ENCODE measurements at regions of chr4 and their contacts with region 1.

Region 1: DNA sequence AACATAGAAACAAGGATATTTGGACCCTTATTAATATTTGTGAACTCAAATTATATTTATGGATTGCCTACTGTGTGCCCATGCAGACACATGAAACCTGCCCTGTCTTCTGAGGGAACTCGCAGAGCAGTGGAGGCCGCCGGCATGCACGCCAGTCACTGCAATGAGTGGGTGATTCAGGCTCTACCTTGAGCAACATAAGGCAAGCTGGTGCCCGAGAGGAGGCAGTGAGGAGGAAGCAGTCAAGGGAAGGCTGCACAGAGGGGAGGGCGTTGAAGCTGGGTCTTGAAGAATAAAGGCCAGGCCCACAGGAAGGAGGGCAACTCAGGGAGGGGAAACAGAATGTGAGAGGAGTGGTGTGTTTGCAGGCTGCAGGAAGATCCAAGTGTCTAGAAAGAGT is 52.8 kb downstream of the PPEF2 start:
- DNase-seq: peak in 1 of 9 experiments; percentile 4
- ATAC-seq: no peak
- H3K4me3 ChIP-seq: no peak overlapping the region
- H3K4me3 Mint-ChIP-seq: no peak overlapping the region
- H3K27ac ChIP-seq: no peak overlapping the region
- H3K27ac Mint-ChIP-seq: no peak overlapping the region
- H3K4me1 ChIP-seq: no peaks in the 10 kb centered on the region
- H3K4me1 Mint-ChIP-seq: no peaks in the 10 kb centered on the region
- H3K27me3 ChIP-seq: no peaks in the 10 kb centered on the region
- H3K27me3 Mint-ChIP-seq: peaks cover 3% of the 10 kb centered on the region
- CTCF ChIP-seq: no peak

Region 2: GRCh38 chr4:74874753-74875367 is 974.6 kb before region 1 on chr4:
- CTCF ChIA-PET with region 1: interaction called, 5 read pairs
- POLR2A ChIA-PET with region 1: no interaction called
- intact Hi-C with region 1: loop called in 1 of 2 experiments (anchors 2 kb)
- DNase-seq: peak in 4 of 9 experiments; percentile 5 to 68 (median 35)
- ATAC-seq: peak; percentile 61
- H3K4me3 ChIP-seq: no peak overlapping the region
- H3K4me3 Mint-ChIP-seq: no peak overlapping the region
- H3K27ac ChIP-seq: no peak overlapping the region
- H3K27ac Mint-ChIP-seq: no peak overlapping the region
- H3K4me1 ChIP-seq: no peaks in the 10 kb centered on the region
- H3K4me1 Mint-ChIP-seq: no peaks in the 10 kb centered on the region
- H3K27me3 ChIP-seq: no peaks in the 10 kb centered on the region
- H3K27me3 Mint-ChIP-seq: peaks cover 12% of the 10 kb centered on the region
- CTCF ChIP-seq: peak; percentile 76

Region 3: DNA sequence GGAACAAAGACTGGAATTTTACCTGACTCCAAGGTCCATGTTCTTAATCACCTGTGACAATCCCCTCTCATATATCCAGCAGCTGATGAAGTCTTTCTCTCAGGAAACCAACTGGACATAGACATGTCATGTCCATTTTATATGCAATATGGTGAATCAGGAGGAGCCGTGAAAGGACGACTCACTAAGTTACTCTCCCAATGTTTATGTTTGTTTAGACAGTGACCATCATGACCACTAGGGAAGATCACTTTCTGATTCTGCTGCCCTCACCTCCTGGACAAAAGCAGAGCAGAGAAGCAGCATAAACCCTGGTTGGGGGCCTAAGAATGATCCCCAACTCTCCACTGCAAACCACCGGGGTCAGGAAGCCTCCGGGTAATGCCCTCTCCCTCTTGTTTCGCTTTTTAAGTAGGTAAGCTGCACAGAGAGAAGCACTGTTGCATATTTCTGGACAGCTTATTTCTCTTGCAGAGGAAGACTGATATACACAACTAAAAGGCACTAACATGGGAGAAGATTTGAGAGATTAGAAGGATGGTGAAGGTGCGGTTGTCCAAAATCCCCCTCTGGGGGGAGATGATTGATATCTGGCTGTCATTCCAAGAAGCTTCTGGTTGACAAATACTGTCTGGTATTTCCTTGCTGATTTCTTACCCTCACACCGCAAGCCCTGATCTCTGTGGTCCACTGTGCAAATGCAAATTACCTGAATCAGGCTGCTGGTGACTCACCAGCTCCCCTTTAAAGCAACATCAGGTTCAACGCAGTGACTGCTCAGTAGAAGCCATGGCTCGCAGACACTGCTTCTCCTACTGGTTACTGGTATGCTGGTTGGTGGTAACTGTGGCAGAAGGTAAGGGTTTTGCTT is 293.9 kb before region 1 on chr4 and contains the start of gene ODAPH:
- CTCF ChIA-PET with region 1: interaction called, 10 read pairs
- POLR2A ChIA-PET with region 1: no interaction called
- intact Hi-C with region 1: no loop called
- DNase-seq: peak in 3 of 9 experiments; percentile 12 to 35 (median 23)
- ATAC-seq: peak; percentile 73
- H3K4me3 ChIP-seq: no peak within 1 kb of the TSS
- H3K4me3 Mint-ChIP-seq: no peak within 1 kb of the TSS
- H3K27ac ChIP-seq: no peak within 1 kb of the TSS
- H3K27ac Mint-ChIP-seq: no peak within 1 kb of the TSS
- H3K4me1 ChIP-seq: no peaks in the 10 kb centered on the region
- H3K4me1 Mint-ChIP-seq: no peaks in the 10 kb centered on the region
- H3K27me3 ChIP-seq: no peaks in the 10 kb centered on the region
- H3K27me3 Mint-ChIP-seq: peaks cover 18% of the 10 kb centered on the region
- CTCF ChIP-seq: no peak
- total RNA-seq, gene ODAPH: 0.16 TPM in 1 of 2 experiments, not detected in the other

Region 4: GRCh38 chr4:75565481-75565880 is 284.0 kb before region 1 on chr4:
- CTCF ChIA-PET with region 1: interaction called, 22 read pairs
- POLR2A ChIA-PET with region 1: no interaction called
- intact Hi-C with region 1: no loop called
- DNase-seq: no peak
- ATAC-seq: no peak
- H3K4me3 ChIP-seq: no peak overlapping the region
- H3K4me3 Mint-ChIP-seq: no peak overlapping the region
- H3K27ac ChIP-seq: no peak overlapping the region
- H3K27ac Mint-ChIP-seq: no peak overlapping the region
- H3K4me1 ChIP-seq: no peaks in the 10 kb centered on the region
- H3K4me1 Mint-ChIP-seq: no peaks in the 10 kb centered on the region
- H3K27me3 ChIP-seq: no peaks in the 10 kb centered on the region
- H3K27me3 Mint-ChIP-seq: peaks cover 3% of the 10 kb centered on the region
- CTCF ChIP-seq: no peak

Region 5: DNA sequence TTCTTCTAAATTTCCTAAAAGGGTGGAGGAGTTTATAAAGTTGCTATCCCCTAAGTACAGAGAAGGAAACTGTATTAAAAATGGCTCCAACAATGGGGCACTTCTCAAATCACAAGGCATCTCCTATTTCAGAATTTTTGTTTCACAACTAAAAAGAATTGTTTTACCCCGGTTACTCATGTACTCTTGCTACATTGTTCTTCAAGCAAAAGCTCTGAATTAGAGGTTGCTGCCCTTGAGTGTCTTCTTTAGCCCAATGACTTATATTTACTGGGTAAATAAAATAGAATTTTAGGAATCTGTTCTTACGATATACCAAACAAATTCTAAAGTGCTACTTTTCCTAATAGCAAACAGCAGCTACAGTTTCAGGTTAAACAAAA is 14.7 kb before region 1 on chr4:
- CTCF ChIA-PET with region 1: interaction called, 20 read pairs
- POLR2A ChIA-PET with region 1: no interaction called
- intact Hi-C with region 1: no loop called
- DNase-seq: no peak
- ATAC-seq: no peak
- H3K4me3 ChIP-seq: no peak overlapping the region
- H3K4me3 Mint-ChIP-seq: no peak overlapping the region
- H3K27ac ChIP-seq: no peak overlapping the region
- H3K27ac Mint-ChIP-seq: no peak overlapping the region
- H3K4me1 ChIP-seq: no peaks in the 10 kb centered on the region
- H3K4me1 Mint-ChIP-seq: no peaks in the 10 kb centered on the region
- H3K27me3 ChIP-seq: no peaks in the 10 kb centered on the region
- H3K27me3 Mint-ChIP-seq: peaks cover 7% of the 10 kb centered on the region
- CTCF ChIP-seq: no peak

Region 6: DNA sequence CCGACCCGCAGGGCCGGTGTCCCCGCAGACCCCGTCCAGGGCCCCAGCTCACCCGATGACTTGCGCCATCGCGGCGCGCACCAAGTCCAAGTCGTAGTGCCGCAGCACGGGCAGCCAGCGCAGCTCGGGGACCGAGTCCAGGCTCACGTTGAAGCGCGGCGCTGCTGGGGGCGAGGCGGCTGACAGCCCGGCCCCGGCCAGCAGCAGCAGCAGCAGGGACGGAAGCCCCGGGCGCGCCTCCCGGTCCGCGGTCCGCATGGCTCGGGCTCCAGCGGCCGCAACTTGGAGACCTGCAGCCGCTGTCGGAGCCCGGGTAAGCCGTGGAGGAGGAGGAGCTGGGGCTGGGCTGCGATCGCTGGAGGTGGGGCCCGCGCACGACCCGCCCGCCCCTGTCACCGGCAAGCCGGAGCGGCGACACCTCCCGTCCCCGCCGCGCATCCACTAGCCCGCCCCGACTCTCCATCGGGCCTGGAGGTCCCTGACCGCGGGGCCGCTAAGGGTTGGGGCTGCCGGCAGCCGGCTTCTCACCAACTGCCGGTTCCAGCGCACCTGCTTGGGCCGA is 91.3 kb after region 1 on chr4 and contains the start of gene NAAA:
- CTCF ChIA-PET with region 1: no interaction called
- POLR2A ChIA-PET with region 1: no interaction called
- intact Hi-C with region 1: no loop called
- DNase-seq: peak; percentile 44 to 92 (median 72)
- ATAC-seq: peak; percentile 79
- H3K4me3 ChIP-seq: peak within 1 kb of the TSS; percentile 71 to 85
- H3K4me3 Mint-ChIP-seq: peak within 1 kb of the TSS; percentile 95
- H3K27ac ChIP-seq: peak within 1 kb of the TSS; percentile 77 to 88
- H3K27ac Mint-ChIP-seq: peak within 1 kb of the TSS; percentile 95
- H3K4me1 ChIP-seq: peaks cover 5% of the 10 kb centered on the region
- H3K4me1 Mint-ChIP-seq: peaks cover 26% of the 10 kb centered on the region
- H3K27me3 ChIP-seq: no peaks in the 10 kb centered on the region
- H3K27me3 Mint-ChIP-seq: no peaks in the 10 kb centered on the region
- CTCF ChIP-seq: no peak
- total RNA-seq, gene NAAA: 26.1 to 30.4 TPM